ENCODE measurements at regions of chr17 and their contacts with region 1.

Region 1: DNA sequence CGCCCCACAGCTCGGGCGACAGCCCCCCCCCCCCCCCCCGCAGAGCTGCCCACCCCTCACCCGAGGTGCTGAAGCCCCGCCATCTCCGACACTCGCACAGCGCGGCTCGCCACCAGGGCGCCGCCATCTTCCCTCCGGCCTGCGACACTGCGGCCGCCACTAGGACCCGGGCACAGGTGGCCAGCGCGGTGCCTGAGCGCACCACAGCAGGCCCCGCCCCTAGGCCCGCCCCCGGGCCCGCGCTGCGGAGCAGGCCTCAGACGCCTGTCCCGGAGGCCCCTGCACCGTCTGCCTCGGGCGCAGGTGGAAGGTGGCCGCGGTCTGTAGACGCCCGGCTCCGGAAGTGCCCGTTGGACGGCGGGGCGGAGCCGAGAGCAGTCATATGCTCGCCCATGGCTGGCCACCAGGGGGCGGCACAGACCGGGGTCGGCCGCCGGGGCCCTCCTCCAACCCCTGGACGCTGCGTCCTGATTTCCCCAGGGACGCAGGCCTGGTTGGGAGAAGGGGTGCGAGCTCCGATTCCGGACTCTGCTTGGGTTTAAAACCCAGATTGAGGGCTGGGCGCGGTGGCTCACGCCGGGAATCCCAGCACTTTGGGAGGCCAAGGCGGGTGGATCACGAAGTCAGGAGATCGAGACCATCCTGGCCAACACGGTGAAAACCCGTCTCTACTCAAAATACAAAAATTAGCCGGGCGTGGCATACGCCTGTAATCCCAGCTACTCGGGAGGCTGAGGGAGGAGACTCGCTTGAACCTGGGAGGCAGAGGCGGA is at the start of gene MRPL38:
- DNase-seq: peak; percentile 97
- ATAC-seq: peak; percentile 99
- H3K4me3 Mint-ChIP-seq: peak within 1 kb of the TSS; percentile 86
- H3K27ac Mint-ChIP-seq: peak within 1 kb of the TSS; percentile 89
- H3K4me1 Mint-ChIP-seq: peaks cover 5% of the 10 kb centered on the region
- H3K27me3 Mint-ChIP-seq: no peaks in the 10 kb centered on the region
- total RNA-seq, gene MRPL38: 98.0 to 115 TPM

Region 2: DNA sequence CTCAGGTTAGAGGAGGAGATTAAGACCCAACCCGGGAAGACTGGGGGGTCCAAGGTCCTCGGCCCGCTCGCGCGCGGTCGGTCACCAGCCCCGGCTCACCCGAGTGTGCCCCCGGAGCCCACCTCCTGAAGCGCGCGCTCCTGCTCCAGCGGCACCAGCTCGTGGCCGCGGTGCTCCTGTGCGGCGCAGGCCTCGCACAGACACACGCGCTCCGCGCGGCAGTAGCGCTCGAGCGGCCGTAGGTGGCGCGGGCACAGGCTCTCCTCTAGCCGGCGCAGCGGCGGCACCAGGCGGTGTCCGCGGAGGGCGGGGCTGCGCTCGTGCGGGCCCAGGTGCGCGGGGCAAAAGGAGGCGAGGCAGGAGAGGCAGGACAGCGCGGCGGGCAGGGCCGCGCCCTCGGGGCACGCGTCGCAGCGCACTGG is 27.2 kb before region 1 on chr17:
- CTCF ChIA-PET with region 1: interaction called, 6 read pairs
- POLR2A ChIA-PET with region 1: interaction called, 3 read pairs
- intact Hi-C with region 1: loop called in 1 of 2 experiments (anchors 1 kb)
- DNase-seq: peak; percentile 87
- ATAC-seq: peak; percentile 72
- H3K4me3 Mint-ChIP-seq: peak overlapping the region; percentile 91
- H3K27ac Mint-ChIP-seq: peak overlapping the region; percentile 94
- H3K4me1 Mint-ChIP-seq: peaks cover 26% of the 10 kb centered on the region
- H3K27me3 Mint-ChIP-seq: peaks cover 2% of the 10 kb centered on the region

Region 3: GRCh38 chr17:76000016-76000754 is 95.2 kb after region 1 on chr17:
- CTCF ChIA-PET with region 1: interaction called, 38 read pairs
- POLR2A ChIA-PET with region 1: interaction called, 3 read pairs
- intact Hi-C with region 1: loop called (anchors 1 to 5 kb)
- DNase-seq: peak; percentile 85
- ATAC-seq: peak; percentile 83
- H3K4me3 Mint-ChIP-seq: no peak overlapping the region
- H3K27ac Mint-ChIP-seq: no peak overlapping the region
- H3K4me1 Mint-ChIP-seq: peaks cover 14% of the 10 kb centered on the region
- H3K27me3 Mint-ChIP-seq: no peaks in the 10 kb centered on the region

Region 4: DNA sequence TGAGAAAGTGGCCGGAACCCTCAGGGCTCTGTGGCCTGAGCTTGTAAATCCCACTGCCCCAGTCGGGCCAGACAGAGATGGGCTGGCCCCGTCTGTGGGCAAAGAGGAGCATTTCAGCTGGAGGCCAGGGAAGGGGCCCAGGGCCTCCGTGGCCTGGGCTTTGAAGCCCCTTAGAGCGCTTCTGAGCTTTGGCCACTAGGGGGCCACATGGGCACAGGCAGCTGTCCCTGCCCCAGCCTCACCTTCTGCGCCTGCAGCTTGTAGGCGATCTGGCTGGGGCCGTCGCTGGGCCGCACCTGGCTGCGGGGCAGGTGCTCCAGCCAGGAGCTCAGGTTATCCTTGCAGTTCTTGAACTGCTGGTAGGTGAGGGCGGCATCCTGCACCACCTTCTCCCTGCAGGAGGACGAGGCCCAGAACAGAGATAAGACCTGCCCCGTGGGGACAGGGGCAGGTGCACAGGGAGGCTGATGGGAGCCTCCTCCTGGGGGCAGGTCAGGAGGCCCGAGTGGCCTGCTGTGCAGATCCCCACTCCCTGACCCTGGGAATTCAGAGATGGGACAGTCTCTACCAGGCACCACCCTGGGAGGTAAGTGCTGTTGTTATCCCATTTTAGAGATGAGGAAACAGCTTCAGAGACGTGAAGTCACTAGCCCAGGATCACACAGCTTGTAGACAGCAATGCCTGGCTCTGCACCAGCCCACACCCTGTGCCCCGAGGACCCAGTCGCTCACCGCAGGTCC is 109.4 kb after region 1 on chr17:
- CTCF ChIA-PET with region 1: interaction called, 11 read pairs
- POLR2A ChIA-PET with region 1: interaction called, 4 read pairs
- intact Hi-C with region 1: no loop called
- DNase-seq: peak; percentile 90
- ATAC-seq: peak; percentile 99
- H3K4me3 Mint-ChIP-seq: no peak overlapping the region
- H3K27ac Mint-ChIP-seq: no peak overlapping the region
- H3K4me1 Mint-ChIP-seq: peaks cover 3% of the 10 kb centered on the region
- H3K27me3 Mint-ChIP-seq: no peaks in the 10 kb centered on the region

Region 5: DNA sequence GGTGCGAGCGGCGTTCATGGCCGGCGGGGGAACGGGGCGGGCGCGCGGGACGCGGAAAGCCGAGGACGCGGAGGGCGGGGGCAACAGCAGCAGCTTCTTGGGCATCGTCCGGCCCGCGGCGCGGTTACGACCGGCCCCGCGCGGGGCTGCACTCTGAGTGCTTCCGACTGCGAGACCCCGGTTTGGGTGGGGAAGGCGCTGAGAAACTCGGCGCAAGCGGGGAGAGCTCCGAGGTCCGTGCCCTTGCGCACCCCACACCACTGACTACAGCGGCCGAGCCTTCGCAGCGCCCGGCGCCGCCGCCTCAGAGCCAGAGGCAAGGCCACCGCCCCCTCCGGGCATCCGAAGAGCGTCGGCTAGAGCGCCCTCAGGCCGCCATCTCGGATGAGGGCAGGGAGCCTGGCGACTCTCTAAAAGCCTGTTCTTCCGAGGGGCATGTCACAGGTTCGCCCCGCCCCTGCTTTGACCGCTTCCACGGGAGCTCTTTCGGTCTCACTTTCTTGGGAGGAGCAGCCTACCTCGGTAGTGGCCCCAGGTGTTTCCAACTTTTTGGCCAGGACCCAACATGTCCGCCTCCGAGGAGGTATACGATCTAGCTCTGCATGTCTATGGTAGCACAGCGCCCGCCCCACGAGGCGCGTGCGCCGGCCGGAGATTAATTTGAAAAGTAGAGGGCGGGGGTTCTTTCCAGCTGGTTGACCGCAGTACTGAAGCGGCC is 448.8 kb after region 1 on chr17 and contains the start of gene PRPSAP1:
- CTCF ChIA-PET with region 1: interaction called, 3 read pairs
- POLR2A ChIA-PET with region 1: no interaction called
- intact Hi-C with region 1: loop called in 1 of 2 experiments (anchors 1 kb)
- DNase-seq: peak; percentile 88
- ATAC-seq: peak; percentile 97
- H3K4me3 Mint-ChIP-seq: peak within 1 kb of the TSS; percentile 78
- H3K27ac Mint-ChIP-seq: peak within 1 kb of the TSS; percentile 96
- H3K4me1 Mint-ChIP-seq: peaks cover 18% of the 10 kb centered on the region
- H3K27me3 Mint-ChIP-seq: no peaks in the 10 kb centered on the region
- total RNA-seq, gene PRPSAP1: 26.7 to 34.9 TPM